ENCODE measurements at regions of chr1 and their contacts with region 1.

Region 1: GRCh38 chr1:89622895-89623294 is 10.0 kb upstream of the LRRC8C start:
- DNase-seq: no peak
- H3K4me3 Mint-ChIP-seq: no peak overlapping the region
- H3K27ac Mint-ChIP-seq: no peak overlapping the region
- H3K4me1 Mint-ChIP-seq: peaks cover 54% of the 10 kb centered on the region
- H3K27me3 Mint-ChIP-seq: no peaks in the 10 kb centered on the region

Region 2: GRCh38 chr1:89483010-89483756 is 139.7 kb before region 1 on chr1:
- CTCF ChIA-PET with region 1: interaction called, 11 read pairs
- DNase-seq: peak; percentile 90
- H3K4me3 Mint-ChIP-seq: no peak overlapping the region
- H3K27ac Mint-ChIP-seq: no peak overlapping the region
- H3K4me1 Mint-ChIP-seq: peaks cover 13% of the 10 kb centered on the region
- H3K27me3 Mint-ChIP-seq: peaks cover 20% of the 10 kb centered on the region

Region 3: GRCh38 chr1:89974701-89975470 is 352.0 kb after region 1 on chr1:
- CTCF ChIA-PET with region 1: no interaction called
- DNase-seq: no peak
- H3K4me3 Mint-ChIP-seq: no peak overlapping the region
- H3K27ac Mint-ChIP-seq: no peak overlapping the region
- H3K4me1 Mint-ChIP-seq: peaks cover 3% of the 10 kb centered on the region
- H3K27me3 Mint-ChIP-seq: peaks cover 24% of the 10 kb centered on the region

Measured in activated naive CD4-positive, alpha-beta T cell treated with anti-CD3 and anti-CD28 coated beads, Interleukin-2, amount 10 ng/mL, durations not matched to agents 7 days and 5 days (primary cell).